CD4-positive, alpha-beta T cell (primary cell): ENCODE measurements at regions of chr14 and their contacts with region 1.

Region 1: GRCh38 chr14:22570132-22570949 is 18.7 kb downstream of the DAD1 start:
- DNase-seq: peak; percentile 63 to 98 (median 80)
- ATAC-seq: peak; percentile 85
- H3K4me3 ChIP-seq: peak overlapping the region; percentile 45
- H3K4me3 Mint-ChIP-seq: peak overlapping the region; percentile 73
- H3K27ac ChIP-seq: peak overlapping the region; percentile 79 to 92
- H3K27ac Mint-ChIP-seq: peak overlapping the region; percentile 97
- H3K4me1 ChIP-seq: peaks cover 43% of the 10 kb centered on the region
- H3K4me1 Mint-ChIP-seq: peaks cover 71% of the 10 kb centered on the region
- H3K27me3 ChIP-seq: no peaks in the 10 kb centered on the region
- H3K27me3 Mint-ChIP-seq: no peaks in the 10 kb centered on the region
- CTCF ChIP-seq: peak; percentile 92

Region 2: GRCh38 chr14:21711360-21711961 is 858.9 kb before region 1 on chr14:
- CTCF ChIA-PET with region 1: interaction called, 15 read pairs
- POLR2A ChIA-PET with region 1: interaction called, 3 read pairs
- intact Hi-C with region 1: no loop called
- DNase-seq: peak in 6 of 14 experiments; percentile 8 to 70 (median 48)
- ATAC-seq: peak; percentile 60
- H3K4me3 ChIP-seq: no peak overlapping the region
- H3K4me3 Mint-ChIP-seq: peak overlapping the region; percentile 81
- H3K27ac ChIP-seq: no peak overlapping the region
- H3K27ac Mint-ChIP-seq: peak overlapping the region; percentile 77
- H3K4me1 ChIP-seq: peaks cover 5% of the 10 kb centered on the region
- H3K4me1 Mint-ChIP-seq: peaks cover 14% of the 10 kb centered on the region
- H3K27me3 ChIP-seq: peaks cover 0 to 3% of the 10 kb centered on the region in 2 experiments
- H3K27me3 Mint-ChIP-seq: peaks cover 37% of the 10 kb centered on the region
- CTCF ChIP-seq: peak; percentile 90

Region 3: GRCh38 chr14:21978184-21978998 is 592.0 kb before region 1 on chr14:
- CTCF ChIA-PET with region 1: interaction called, 22 read pairs
- POLR2A ChIA-PET with region 1: no interaction called
- intact Hi-C with region 1: no loop called
- DNase-seq: peak; percentile 24 to 81 (median 52)
- ATAC-seq: peak; percentile 82
- H3K4me3 ChIP-seq: peak overlapping the region; percentile 40
- H3K4me3 Mint-ChIP-seq: peak overlapping the region; percentile 67
- H3K27ac ChIP-seq: no peak overlapping the region
- H3K27ac Mint-ChIP-seq: peak overlapping the region; percentile 77
- H3K4me1 ChIP-seq: peaks cover 4% of the 10 kb centered on the region
- H3K4me1 Mint-ChIP-seq: peaks cover 50% of the 10 kb centered on the region
- H3K27me3 ChIP-seq: no peaks in the 10 kb centered on the region
- H3K27me3 Mint-ChIP-seq: no peaks in the 10 kb centered on the region
- CTCF ChIP-seq: peak; percentile 75

Region 4: DNA sequence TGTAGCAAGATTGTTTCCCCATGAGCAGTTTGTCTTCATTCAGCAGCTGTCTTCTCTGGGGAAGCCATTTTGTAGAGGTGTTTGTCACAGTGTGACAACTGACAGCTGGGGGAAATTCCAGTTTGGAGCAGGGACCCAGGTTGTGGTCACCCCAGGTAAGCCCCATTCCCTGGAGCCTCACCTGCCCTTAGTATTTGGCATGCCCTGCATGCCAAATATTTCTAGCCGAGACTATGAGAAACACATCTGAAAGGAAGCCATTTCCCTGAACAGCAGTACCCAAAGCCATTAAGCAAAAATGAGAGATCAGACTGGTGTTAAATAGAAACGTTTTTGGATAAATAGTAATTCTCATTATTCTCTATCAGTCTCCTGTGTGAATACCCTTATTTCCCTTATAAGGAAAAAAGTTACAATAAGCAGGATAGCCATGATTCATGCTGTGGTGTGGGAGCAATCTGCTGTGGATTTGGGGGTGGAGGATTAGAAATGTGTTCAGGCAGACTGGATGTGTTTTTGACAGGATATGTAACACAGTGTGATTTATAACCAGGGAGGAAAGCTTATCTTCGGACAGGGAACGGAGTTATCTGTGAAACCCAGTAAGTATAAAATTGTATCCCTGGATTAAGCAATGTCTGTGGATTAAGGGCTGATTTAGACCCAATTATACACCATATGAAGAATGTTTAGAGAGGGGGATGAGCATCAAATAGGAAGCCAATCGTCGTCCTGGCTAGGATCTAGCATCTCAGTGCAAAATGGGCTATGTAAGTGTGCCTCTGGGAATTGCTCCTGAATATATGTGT is 50.3 kb before region 1 on chr14:
- CTCF ChIA-PET with region 1: interaction called, 24 read pairs
- POLR2A ChIA-PET with region 1: interaction called, 97 read pairs
- intact Hi-C with region 1: no loop called
- DNase-seq: peak in 2 of 14 experiments; percentile 30 to 61
- ATAC-seq: peak; percentile 19
- H3K4me3 ChIP-seq: peak overlapping the region; percentile 61
- H3K4me3 Mint-ChIP-seq: peak overlapping the region; percentile 86
- H3K27ac ChIP-seq: peak overlapping the region; percentile 85 to 99
- H3K27ac Mint-ChIP-seq: peak overlapping the region; percentile 93
- H3K4me1 ChIP-seq: peaks cover 89% of the 10 kb centered on the region
- H3K4me1 Mint-ChIP-seq: peaks cover 100% of the 10 kb centered on the region
- H3K27me3 ChIP-seq: no peaks in the 10 kb centered on the region
- H3K27me3 Mint-ChIP-seq: no peaks in the 10 kb centered on the region
- CTCF ChIP-seq: no peak

Region 5: DNA sequence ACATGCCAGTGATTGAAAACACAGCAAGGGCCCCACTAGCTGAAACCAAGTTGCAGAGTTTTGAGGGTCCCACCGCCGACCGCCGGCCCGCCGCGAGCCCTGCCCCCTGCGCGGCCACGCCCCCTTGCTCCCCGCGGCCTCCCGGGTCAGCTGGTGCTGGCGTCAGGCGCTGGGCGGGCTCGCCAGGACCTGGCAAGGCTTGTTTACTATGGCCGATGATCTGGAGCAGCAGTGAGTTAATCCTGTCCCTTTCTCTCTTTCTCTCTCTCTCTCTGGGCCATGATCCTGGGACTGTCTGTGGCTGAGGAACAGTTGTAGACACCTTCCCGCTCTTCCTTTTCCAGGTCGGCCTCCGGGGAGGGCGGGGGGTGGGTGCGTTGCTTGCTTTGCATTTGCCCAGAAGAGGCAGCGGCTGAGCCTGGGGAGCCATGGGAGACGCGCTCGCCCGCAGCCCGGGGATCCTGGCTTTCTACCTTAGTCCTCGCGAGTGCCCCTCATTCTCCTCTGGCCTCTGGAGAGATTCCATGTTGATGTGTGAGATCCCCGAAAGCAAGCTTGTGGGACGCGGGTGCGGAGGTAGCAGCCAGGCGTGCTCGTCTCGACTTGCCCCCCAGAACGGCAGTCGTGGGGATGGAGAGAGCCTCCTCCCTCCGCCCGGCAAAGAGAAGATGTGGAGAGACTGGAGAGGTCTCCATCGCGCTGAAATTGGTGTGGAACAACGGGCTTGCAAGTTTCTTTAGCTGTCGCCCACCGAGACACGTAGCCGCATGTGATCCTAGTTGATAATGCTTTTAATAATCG is 28.0 kb after region 1 on chr14 and contains the start of gene ABHD4:
- CTCF ChIA-PET with region 1: interaction called, 87 read pairs
- POLR2A ChIA-PET with region 1: interaction called, 13 read pairs
- intact Hi-C with region 1: no loop called
- DNase-seq: peak; percentile 14 to 77 (median 50)
- ATAC-seq: peak; percentile 61
- H3K4me3 ChIP-seq: peak within 1 kb of the TSS; percentile 75
- H3K4me3 Mint-ChIP-seq: peak within 1 kb of the TSS; percentile 98
- H3K27ac ChIP-seq: peak within 1 kb of the TSS; percentile 34 to 38
- H3K27ac Mint-ChIP-seq: peak within 1 kb of the TSS; percentile 77
- H3K4me1 ChIP-seq: peaks cover 21% of the 10 kb centered on the region
- H3K4me1 Mint-ChIP-seq: peaks cover 24% of the 10 kb centered on the region
- H3K27me3 ChIP-seq: no peaks in the 10 kb centered on the region
- H3K27me3 Mint-ChIP-seq: no peaks in the 10 kb centered on the region
- CTCF ChIP-seq: no peak
- total RNA-seq, gene ABHD4: 7.1 to 8.9 TPM

Region 6: GRCh38 chr14:22852940-22853767 is 282.8 kb after region 1 on chr14:
- CTCF ChIA-PET with region 1: interaction called, 43 read pairs
- POLR2A ChIA-PET with region 1: interaction called, 23 read pairs
- intact Hi-C with region 1: loop called (anchors 1 kb)
- DNase-seq: peak; percentile 81 to 96 (median 90)
- ATAC-seq: peak; percentile 91
- H3K4me3 ChIP-seq: peak overlapping the region; percentile 69
- H3K4me3 Mint-ChIP-seq: peak overlapping the region; percentile 83
- H3K27ac ChIP-seq: no peak overlapping the region
- H3K27ac Mint-ChIP-seq: peak overlapping the region; percentile 61
- H3K4me1 ChIP-seq: peaks cover 18% of the 10 kb centered on the region
- H3K4me1 Mint-ChIP-seq: peaks cover 27% of the 10 kb centered on the region
- H3K27me3 ChIP-seq: no peaks in the 10 kb centered on the region
- H3K27me3 Mint-ChIP-seq: peaks cover 5% of the 10 kb centered on the region
- CTCF ChIP-seq: peak; percentile 99